ENCODE measurements at regions of chr7 and their contacts with region 1.

Region 1: GRCh38 chr7:41003031-41003925 is 699.6 kb downstream of the INHBA start:
- DNase-seq: peak; percentile 49
- H3K4me3 ChIP-seq: no peak overlapping the region
- H3K27ac ChIP-seq: peak overlapping the region; percentile 91
- H3K4me1 ChIP-seq: peaks cover 50% of the 10 kb centered on the region
- H3K27me3 ChIP-seq: no peaks in the 10 kb centered on the region
- CTCF ChIP-seq: peak; percentile 71 to 83

Region 2: GRCh38 chr7:40843338-40843985 is 159.8 kb before region 1 on chr7:
- CTCF ChIA-PET with region 1: no interaction called
- dilution Hi-C with region 1: no loop called
- in situ Hi-C with region 1: no loop called
- intact Hi-C with region 1: loop called (anchors 2 kb)
- DNase-seq: peak; percentile 94
- H3K4me3 ChIP-seq: no peak overlapping the region
- H3K27ac ChIP-seq: peak overlapping the region; percentile 93
- H3K4me1 ChIP-seq: peaks cover 31% of the 10 kb centered on the region
- H3K27me3 ChIP-seq: no peaks in the 10 kb centered on the region
- CTCF ChIP-seq: no peak

Region 3: DNA sequence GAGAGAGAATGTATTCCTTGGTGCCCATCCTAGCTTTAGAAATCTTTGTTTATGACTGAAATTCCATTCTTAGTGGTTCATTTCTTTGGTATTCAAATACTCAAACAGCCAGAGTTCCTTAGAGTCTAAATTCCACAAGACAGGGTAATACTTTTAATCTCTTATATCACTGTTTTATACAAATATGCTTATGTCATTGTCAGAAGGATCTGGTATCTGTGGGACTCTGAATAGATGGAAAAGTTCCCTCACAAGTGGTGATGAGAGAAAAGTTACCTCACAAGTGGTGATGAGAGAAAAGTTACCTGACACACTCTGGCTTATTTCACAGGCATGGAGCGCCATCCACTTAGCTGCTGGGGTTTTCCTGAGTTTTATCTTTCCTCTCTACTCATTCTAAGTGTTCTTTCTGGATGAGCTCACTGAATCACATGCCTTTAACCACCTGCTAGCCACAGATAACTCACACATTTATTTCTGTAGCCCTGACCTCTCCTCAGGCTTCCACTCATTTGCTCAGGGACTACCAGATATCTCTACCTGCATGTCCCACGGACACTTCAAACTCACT is 84.5 kb before region 1 on chr7:
- CTCF ChIA-PET with region 1: no interaction called
- dilution Hi-C with region 1: loop called (anchors 5 kb)
- in situ Hi-C with region 1: no loop called
- intact Hi-C with region 1: loop called (anchors 2 kb)
- DNase-seq: peak; percentile 93
- H3K4me3 ChIP-seq: no peak overlapping the region
- H3K27ac ChIP-seq: peak overlapping the region; percentile 65
- H3K4me1 ChIP-seq: peaks cover 34% of the 10 kb centered on the region
- H3K27me3 ChIP-seq: no peaks in the 10 kb centered on the region
- CTCF ChIP-seq: no peak

Region 4: GRCh38 chr7:40959955-40960354 is 43.3 kb before region 1 on chr7:
- CTCF ChIA-PET with region 1: no interaction called
- dilution Hi-C with region 1: loop called (anchors 5 kb)
- in situ Hi-C with region 1: no loop called
- intact Hi-C with region 1: no loop called
- DNase-seq: no peak
- H3K4me3 ChIP-seq: no peak overlapping the region
- H3K27ac ChIP-seq: no peak overlapping the region
- H3K4me1 ChIP-seq: no peaks in the 10 kb centered on the region
- H3K27me3 ChIP-seq: no peaks in the 10 kb centered on the region
- CTCF ChIP-seq: no peak

Region 5: GRCh38 chr7:41029072-41029499 is 25.8 kb after region 1 on chr7:
- CTCF ChIA-PET with region 1: no interaction called
- dilution Hi-C with region 1: no loop called
- in situ Hi-C with region 1: no loop called
- intact Hi-C with region 1: loop called (anchors 1 kb)
- DNase-seq: peak; percentile 100
- H3K4me3 ChIP-seq: no peak overlapping the region
- H3K27ac ChIP-seq: peak overlapping the region; percentile 87
- H3K4me1 ChIP-seq: peaks cover 45% of the 10 kb centered on the region
- H3K27me3 ChIP-seq: no peaks in the 10 kb centered on the region
- CTCF ChIP-seq: no peak

Region 6: GRCh38 chr7:41097501-41097900 is 94.2 kb after region 1 on chr7:
- CTCF ChIA-PET with region 1: no interaction called
- dilution Hi-C with region 1: no loop called
- in situ Hi-C with region 1: no loop called
- intact Hi-C with region 1: no loop called
- DNase-seq: peak; percentile 95
- H3K4me3 ChIP-seq: no peak overlapping the region
- H3K27ac ChIP-seq: peak overlapping the region; percentile 81
- H3K4me1 ChIP-seq: peaks cover 22% of the 10 kb centered on the region
- H3K27me3 ChIP-seq: no peaks in the 10 kb centered on the region
- CTCF ChIP-seq: no peak

Region 7: DNA sequence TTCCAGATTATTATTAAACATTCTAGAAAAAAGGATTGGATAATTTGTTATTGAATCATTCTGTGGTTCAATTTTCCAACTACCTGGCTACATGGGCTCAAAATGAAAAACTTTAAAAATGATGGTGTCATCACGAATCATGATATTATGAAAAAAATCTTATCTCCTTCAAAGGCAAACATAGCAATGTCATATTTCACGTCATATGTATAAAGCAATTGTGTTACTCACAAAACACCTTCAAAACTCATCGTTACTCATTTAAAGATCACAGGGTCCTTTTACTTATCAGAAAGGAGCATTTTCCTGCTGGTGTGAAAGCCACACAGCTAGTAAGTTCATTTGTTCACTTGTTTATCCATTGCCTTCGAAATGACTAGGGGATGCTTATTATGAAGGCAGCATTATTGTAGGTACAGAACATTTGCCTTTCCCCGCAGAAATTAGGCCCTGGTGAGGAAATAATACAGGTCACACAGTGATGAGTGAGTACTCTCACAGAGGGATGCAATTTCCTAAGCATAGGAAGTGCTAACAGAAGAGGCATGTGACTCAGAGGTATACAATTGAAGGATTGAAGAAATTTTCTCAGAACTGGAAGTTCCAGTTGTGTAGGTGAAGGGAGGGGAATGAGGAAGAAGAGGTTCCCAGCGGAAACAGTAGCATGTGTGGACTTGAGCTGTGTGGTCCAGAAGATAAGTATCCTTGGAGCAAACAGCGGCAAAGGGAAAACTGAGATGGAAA is 221.0 kb after region 1 on chr7:
- CTCF ChIA-PET with region 1: no interaction called
- dilution Hi-C with region 1: no loop called
- in situ Hi-C with region 1: no loop called
- intact Hi-C with region 1: loop called (anchors 10 kb)
- DNase-seq: peak; percentile 98
- H3K4me3 ChIP-seq: no peak overlapping the region
- H3K27ac ChIP-seq: peak overlapping the region; percentile 93
- H3K4me1 ChIP-seq: peaks cover 32% of the 10 kb centered on the region
- H3K27me3 ChIP-seq: no peaks in the 10 kb centered on the region
- CTCF ChIP-seq: no peak